Caco-2 (cell line): ENCODE measurements at regions of chr22 and their contacts with region 1.

Region 1: GRCh38 chr22:31561238-31561887 is 65.0 kb downstream of the SFI1 start:
- DNase-seq: peak; percentile 86 to 89
- H3K4me3 ChIP-seq: no peak overlapping the region
- H3K4me3 Mint-ChIP-seq: no peak overlapping the region
- H3K27ac Mint-ChIP-seq: no peak overlapping the region
- H3K4me1 ChIP-seq: 0 out of 2 replicates have a peak, but pooled peaks cover 3% of the 10 kb centered on the region
- H3K4me1 Mint-ChIP-seq: peaks cover 7% of the 10 kb centered on the region
- H3K27me3 ChIP-seq: no peaks in the 10 kb centered on the region
- H3K27me3 Mint-ChIP-seq: no peaks in the 10 kb centered on the region
- CTCF ChIP-seq: peak; percentile 77 to 91

Region 2: DNA sequence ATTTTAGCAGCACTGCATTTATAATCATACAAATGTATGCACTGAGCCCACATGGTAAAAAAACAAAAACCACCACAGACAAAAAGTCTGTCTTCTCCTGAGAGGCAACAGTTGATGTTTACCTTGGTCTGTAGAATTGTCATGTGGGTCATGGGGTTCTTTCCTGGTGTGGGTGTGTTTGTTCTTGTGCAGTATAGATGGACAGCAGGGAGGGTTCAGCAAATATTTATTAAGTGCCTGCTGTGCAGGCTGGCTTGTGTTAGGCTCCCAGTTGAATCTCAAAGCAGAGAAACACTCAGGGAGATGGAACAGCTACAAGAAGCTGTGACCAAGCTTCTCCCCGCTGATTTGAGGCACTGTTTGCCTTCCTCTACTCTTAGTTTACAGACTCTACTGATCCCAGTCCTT is 18.5 kb after region 1 on chr22:
- CTCF ChIA-PET with region 1: no interaction called
- POLR2A ChIA-PET with region 1: no interaction called
- intact Hi-C with region 1: no loop called
- DNase-seq: peak; percentile 36 to 42
- H3K4me3 ChIP-seq: no peak overlapping the region
- H3K4me3 Mint-ChIP-seq: no peak overlapping the region
- H3K27ac Mint-ChIP-seq: peak overlapping the region; percentile 36
- H3K4me1 ChIP-seq: peaks cover 48% of the 10 kb centered on the region
- H3K4me1 Mint-ChIP-seq: peaks cover 32% of the 10 kb centered on the region
- H3K27me3 ChIP-seq: no peaks in the 10 kb centered on the region
- H3K27me3 Mint-ChIP-seq: no peaks in the 10 kb centered on the region
- CTCF ChIP-seq: no peak

Region 3: DNA sequence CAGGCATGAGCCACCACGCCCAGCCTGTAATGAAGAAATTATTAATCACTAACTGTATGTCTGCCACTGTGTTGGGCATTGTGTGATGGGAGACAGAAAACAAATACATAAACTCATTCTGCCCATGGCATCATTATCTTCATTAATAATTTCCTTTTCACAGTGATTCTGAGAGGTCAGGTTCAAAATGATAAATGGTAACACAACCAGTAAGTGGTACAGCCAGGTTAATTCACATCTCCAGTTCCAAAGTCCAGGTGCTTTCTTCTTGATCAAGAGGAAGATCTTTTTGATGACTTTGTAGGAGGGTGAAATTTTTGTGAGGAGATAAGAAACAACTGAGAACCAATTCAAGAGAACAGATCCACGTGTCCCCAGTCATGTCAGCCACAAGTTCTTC is 33.9 kb after region 1 on chr22:
- CTCF ChIA-PET with region 1: no interaction called
- POLR2A ChIA-PET with region 1: no interaction called
- intact Hi-C with region 1: loop called (anchors 5 kb)
- DNase-seq: no peak
- H3K4me3 ChIP-seq: no peak overlapping the region
- H3K4me3 Mint-ChIP-seq: no peak overlapping the region
- H3K27ac Mint-ChIP-seq: peak overlapping the region; percentile 49
- H3K4me1 ChIP-seq: peaks cover 16% of the 10 kb centered on the region
- H3K4me1 Mint-ChIP-seq: peaks cover 9% of the 10 kb centered on the region
- H3K27me3 ChIP-seq: no peaks in the 10 kb centered on the region
- H3K27me3 Mint-ChIP-seq: no peaks in the 10 kb centered on the region
- CTCF ChIP-seq: no peak

Region 4: GRCh38 chr22:31616315-31617001 is 55.1 kb after region 1 on chr22:
- CTCF ChIA-PET with region 1: interaction called, 5 read pairs
- POLR2A ChIA-PET with region 1: no interaction called
- intact Hi-C with region 1: loop called (anchors 5 kb)
- DNase-seq: no peak
- H3K4me3 ChIP-seq: no peak overlapping the region
- H3K4me3 Mint-ChIP-seq: no peak overlapping the region
- H3K27ac Mint-ChIP-seq: peak overlapping the region; percentile 25
- H3K4me1 ChIP-seq: peaks cover 13% of the 10 kb centered on the region
- H3K4me1 Mint-ChIP-seq: no peaks in the 10 kb centered on the region
- H3K27me3 ChIP-seq: no peaks in the 10 kb centered on the region
- H3K27me3 Mint-ChIP-seq: no peaks in the 10 kb centered on the region
- CTCF ChIP-seq: no peak

Region 5: DNA sequence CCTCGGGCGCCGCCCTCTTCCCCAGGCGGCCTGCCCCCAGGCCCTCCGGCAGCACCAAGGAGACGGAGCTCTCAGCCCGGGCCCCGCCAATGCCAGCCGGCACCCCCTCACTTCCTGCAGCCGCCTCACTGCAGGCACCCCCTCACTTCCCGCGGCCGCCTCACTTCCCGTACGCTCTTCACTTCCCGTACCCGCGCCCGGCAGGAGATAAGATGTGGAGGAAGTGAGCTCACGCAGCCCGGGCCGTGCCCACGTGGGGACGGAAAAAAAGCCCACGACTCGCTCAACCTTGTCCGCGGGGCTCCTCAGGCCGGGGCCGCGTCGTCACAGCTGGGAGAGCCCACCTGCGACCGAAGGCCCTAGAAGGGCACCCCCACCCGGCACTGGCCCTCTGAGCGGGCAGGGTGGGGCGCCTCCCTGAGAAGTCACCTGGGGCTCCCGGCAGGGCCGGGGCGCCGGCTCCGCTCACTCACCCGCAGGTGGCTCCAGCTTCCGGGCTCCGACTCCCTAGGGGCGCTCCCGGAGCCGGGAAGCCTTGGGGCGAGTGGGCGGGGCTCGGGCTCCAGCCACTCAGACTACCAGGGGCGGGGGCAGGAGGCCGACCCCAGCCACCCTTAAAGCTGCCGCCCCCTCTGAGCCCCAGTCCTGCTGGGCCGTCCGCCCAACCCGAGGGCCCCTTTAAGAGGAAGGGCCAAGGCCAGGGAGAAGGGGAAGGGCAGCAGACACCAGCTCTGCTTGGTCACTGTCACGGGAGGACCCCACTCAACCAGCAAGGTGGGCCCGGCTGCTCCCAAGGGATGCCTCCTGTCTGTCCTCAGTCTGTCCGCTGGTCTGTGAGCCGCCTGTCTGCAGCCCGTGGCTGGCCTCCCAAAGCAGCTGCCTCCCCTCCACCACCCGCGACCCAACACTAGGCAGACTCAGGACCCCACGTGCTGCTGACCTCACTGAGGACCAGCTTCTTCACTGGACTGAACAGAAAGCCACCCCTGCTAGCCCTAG is 69.3 kb after region 1 on chr22:
- CTCF ChIA-PET with region 1: interaction called, 19 read pairs
- POLR2A ChIA-PET with region 1: no interaction called
- intact Hi-C with region 1: loop called (anchors 1 kb)
- DNase-seq: peak; percentile 88 to 92
- H3K4me3 ChIP-seq: peak overlapping the region; percentile 60
- H3K4me3 Mint-ChIP-seq: peak overlapping the region; percentile 80
- H3K27ac Mint-ChIP-seq: peak overlapping the region; percentile 29
- H3K4me1 ChIP-seq: peaks cover 36% of the 10 kb centered on the region
- H3K4me1 Mint-ChIP-seq: peaks cover 29% of the 10 kb centered on the region
- H3K27me3 ChIP-seq: no peaks in the 10 kb centered on the region
- H3K27me3 Mint-ChIP-seq: no peaks in the 10 kb centered on the region
- CTCF ChIP-seq: no peak